ENCODE measurements at regions of chr14 and their contacts with region 1.

Region 1: DNA sequence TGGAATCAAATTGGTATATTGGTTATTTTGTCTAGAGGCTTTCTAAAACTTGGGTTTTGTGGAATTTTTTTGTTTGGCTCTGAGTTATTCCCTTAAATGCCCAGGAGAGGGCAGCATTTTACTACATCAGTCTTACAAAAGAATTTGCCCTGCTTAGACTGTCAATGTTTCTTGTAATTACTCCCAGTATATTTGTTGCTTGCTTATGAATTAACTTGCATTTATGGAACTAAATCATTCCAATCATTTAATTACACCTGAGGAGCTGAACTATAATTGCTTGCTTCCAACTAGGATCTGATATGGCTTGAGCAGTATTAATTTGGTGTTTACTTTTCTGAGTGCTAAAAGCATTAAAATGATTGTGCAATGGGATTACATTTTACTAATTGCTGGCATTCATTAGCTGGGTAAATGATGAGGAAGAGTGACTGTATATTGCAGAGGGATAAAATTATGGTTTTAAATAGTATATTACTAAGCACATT is 48.7 kb downstream of the MIPOL1 start:
- DNase-seq: no peak
- H3K4me3 Mint-ChIP-seq: no peak overlapping the region
- H3K27ac Mint-ChIP-seq: no peak overlapping the region
- H3K4me1 Mint-ChIP-seq: no peaks in the 10 kb centered on the region
- H3K27me3 Mint-ChIP-seq: no peaks in the 10 kb centered on the region

Region 2: DNA sequence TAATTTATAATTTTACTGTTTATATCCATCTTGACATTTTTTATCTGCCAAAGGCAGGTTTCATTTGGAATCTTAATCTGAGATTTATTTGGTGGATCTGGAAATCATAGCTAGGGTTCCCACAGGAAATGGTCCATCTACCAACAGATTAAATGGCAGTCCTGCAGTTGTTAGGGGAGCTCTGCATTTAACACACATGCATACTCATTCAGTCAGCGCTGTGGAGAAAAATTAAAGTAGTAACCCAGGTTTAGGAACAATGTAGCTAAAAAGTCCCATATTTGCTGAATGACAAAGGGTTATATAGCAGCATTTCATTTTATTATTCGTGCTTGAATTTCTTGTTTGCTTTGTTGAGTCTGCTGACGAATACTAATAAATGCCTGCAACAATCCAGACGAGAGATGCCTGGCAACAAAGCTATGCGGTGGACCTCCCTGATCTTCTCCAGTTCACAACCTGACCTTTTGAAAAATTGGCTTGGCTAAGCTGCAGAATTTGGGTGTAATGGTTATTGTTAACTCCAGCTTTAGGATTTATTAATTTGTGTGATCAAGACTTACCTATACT is 11.1 kb after region 1 on chr14:
- CTCF ChIA-PET with region 1: interaction called, 10 read pairs
- intact Hi-C with region 1: no loop called
- DNase-seq: no peak
- H3K4me3 Mint-ChIP-seq: no peak overlapping the region
- H3K27ac Mint-ChIP-seq: no peak overlapping the region
- H3K4me1 Mint-ChIP-seq: no peaks in the 10 kb centered on the region
- H3K27me3 Mint-ChIP-seq: no peaks in the 10 kb centered on the region

Region 3: DNA sequence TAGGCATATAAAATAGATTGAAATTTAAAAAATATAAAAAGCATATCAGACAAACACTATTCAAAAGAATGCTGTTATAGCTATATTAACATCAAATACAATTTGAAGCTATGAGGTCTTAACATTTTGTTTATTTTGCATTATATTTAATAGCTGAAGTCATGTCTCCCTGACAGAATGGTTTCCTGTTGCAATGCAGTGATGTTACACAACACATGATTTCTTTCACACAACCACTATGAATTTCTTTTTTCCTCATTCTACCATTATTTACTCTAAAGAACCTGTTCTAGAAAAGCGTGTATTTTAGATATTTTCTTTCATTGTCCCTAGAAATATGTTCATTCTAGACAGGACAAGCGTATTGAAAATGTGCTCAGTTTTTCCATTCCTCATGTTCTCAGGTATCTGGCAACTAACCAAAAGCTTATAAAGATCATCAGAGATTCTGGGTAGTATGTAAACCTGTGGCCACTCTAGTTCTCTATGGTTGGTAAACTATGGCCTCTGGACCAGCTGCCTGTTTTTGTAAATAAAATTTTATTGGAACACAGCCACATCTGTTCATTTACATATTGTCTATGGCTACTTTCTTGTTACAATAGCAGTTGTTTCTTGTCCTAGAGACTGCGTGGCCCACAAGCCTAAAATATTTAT is 164.7 kb after region 1 on chr14:
- CTCF ChIA-PET with region 1: no interaction called
- intact Hi-C with region 1: no loop called
- DNase-seq: no peak
- H3K4me3 Mint-ChIP-seq: no peak overlapping the region
- H3K27ac Mint-ChIP-seq: no peak overlapping the region
- H3K4me1 Mint-ChIP-seq: no peaks in the 10 kb centered on the region
- H3K27me3 Mint-ChIP-seq: no peaks in the 10 kb centered on the region

Region 4: DNA sequence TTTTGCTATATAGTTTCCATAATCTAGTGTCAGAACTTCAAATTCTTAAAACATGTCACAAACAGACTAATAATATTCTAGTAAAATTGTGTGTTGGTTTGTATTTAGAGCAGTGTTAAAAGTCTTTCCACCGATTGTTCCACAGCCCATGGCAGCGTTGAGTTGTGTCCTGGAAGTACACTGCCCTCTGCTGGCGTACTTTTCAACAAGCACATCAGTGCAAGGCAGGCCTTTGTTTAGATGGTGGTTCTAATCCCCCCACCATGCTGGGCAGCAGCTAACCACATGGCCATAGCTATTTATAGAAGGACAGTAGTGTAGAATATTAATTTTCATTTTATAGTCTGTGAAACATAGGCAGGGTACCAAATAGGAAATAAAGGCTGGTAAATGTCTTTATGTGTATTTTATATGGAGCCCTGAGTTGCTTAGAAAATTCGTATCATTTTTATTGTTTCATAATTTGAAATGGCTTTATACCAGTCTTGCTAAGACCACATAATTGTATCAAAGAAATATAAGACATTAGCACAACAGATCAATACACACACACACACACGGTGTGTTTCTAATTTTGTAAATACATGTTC is 1621.2 kb after region 1 on chr14:
- CTCF ChIA-PET with region 1: no interaction called
- intact Hi-C with region 1: loop called (anchors 1 kb)
- DNase-seq: peak; percentile 80
- H3K4me3 Mint-ChIP-seq: no peak overlapping the region
- H3K27ac Mint-ChIP-seq: no peak overlapping the region
- H3K4me1 Mint-ChIP-seq: no peaks in the 10 kb centered on the region
- H3K27me3 Mint-ChIP-seq: peaks cover 5% of the 10 kb centered on the region